ENCODE measurements at regions of chr5 and their contacts with region 1.

Region 1: GRCh38 chr5:178626484-178627258 is at the start of gene CLK4:
- DNase-seq: peak; percentile 97
- H3K4me3 Mint-ChIP-seq: peak within 1 kb of the TSS; percentile 88
- H3K27ac Mint-ChIP-seq: peak within 1 kb of the TSS; percentile 100
- H3K4me1 Mint-ChIP-seq: peaks cover 32% of the 10 kb centered on the region
- H3K27me3 Mint-ChIP-seq: no peaks in the 10 kb centered on the region
- CTCF ChIP-seq: no peak
- total RNA-seq, gene CLK4: 49.3 and 51.7 TPM in 2 replicates

Region 2: DNA sequence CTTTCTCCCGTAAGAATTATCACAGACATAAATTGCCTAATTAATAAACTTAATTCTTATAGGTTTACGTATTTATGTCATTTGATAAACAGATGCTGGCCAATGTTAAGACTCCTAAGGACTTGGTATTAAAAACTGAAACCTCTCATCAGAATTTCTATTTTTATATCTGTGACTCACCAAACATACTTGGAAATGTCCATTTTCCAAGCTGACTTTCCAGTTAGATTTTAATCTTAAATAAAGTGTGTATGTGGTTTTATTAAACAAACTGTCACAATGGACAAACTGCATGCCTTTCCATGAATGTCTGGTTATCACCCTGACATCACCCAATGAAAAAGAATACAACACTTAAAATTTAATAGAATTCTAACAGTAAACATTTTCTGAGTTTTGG is 23.9 kb before region 1 on chr5:
- CTCF ChIA-PET with region 1: interaction called, 5 read pairs
- POLR2A ChIA-PET with region 1: interaction called, 13 read pairs
- intact Hi-C with region 1: no loop called
- DNase-seq: no peak
- H3K4me3 Mint-ChIP-seq: no peak overlapping the region
- H3K27ac Mint-ChIP-seq: no peak overlapping the region
- H3K4me1 Mint-ChIP-seq: no peaks in the 10 kb centered on the region
- H3K27me3 Mint-ChIP-seq: no peaks in the 10 kb centered on the region
- CTCF ChIP-seq: no peak

Region 3: DNA sequence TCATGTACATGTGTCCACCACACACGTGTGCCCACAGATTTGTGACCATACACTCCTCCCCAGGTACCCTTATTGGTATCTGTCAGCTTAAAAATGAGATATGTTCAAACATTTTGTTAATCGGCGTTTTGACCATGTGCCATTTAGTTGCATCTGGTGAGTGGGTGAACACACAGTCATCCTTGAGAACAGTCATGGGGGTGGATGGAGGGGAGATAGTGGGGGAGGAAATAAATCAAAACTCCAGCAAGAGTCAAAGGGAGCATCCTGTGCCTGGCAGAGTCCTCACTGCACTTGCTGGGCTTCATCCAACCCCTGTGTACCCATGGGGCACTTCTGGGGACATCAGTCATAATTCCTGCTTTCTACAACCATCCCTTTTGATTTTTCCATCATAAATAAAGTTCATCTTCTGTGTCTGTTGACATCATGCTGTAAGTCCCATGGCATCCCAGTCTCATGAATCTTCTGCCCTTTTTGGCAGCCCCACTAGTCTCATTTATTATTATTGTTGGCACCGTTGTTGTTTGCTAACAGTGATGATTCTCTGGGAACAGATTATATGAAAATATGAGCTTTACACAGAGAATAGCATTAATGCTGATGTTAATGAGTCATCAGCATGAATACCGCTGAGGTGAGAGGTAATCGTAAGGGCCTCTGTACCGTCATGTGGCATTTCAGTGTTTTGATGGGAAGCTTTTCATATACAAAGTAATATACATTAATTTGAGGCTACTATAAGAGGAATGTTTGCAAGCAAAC is 24.6 kb after region 1 on chr5:
- CTCF ChIA-PET with region 1: no interaction called
- POLR2A ChIA-PET with region 1: interaction called, 79 read pairs
- intact Hi-C with region 1: loop called (anchors 2 kb)
- DNase-seq: peak; percentile 95
- H3K4me3 Mint-ChIP-seq: peak overlapping the region; percentile 5
- H3K27ac Mint-ChIP-seq: peak overlapping the region; percentile 17
- H3K4me1 Mint-ChIP-seq: peaks cover 23% of the 10 kb centered on the region
- H3K27me3 Mint-ChIP-seq: no peaks in the 10 kb centered on the region
- CTCF ChIP-seq: no peak

Region 4: GRCh38 chr5:178732281-178732680 is 105.6 kb after region 1 on chr5:
- CTCF ChIA-PET with region 1: interaction called, 8 read pairs
- POLR2A ChIA-PET with region 1: interaction called, 57 read pairs
- intact Hi-C with region 1: loop called (anchors 1 kb)
- DNase-seq: no peak
- H3K4me3 Mint-ChIP-seq: no peak overlapping the region
- H3K27ac Mint-ChIP-seq: no peak overlapping the region
- H3K4me1 Mint-ChIP-seq: peaks cover 8% of the 10 kb centered on the region
- H3K27me3 Mint-ChIP-seq: no peaks in the 10 kb centered on the region
- CTCF ChIP-seq: no peak

Region 5: GRCh38 chr5:178838695-178839685 is 212.3 kb after region 1 on chr5:
- CTCF ChIA-PET with region 1: no interaction called
- POLR2A ChIA-PET with region 1: interaction called, 4 read pairs
- intact Hi-C with region 1: loop called (anchors 5 kb)
- DNase-seq: peak; percentile 75
- H3K4me3 Mint-ChIP-seq: no peak overlapping the region
- H3K27ac Mint-ChIP-seq: no peak overlapping the region
- H3K4me1 Mint-ChIP-seq: peaks cover 5% of the 10 kb centered on the region
- H3K27me3 Mint-ChIP-seq: no peaks in the 10 kb centered on the region
- CTCF ChIP-seq: peak; percentile 93

Region 6: DNA sequence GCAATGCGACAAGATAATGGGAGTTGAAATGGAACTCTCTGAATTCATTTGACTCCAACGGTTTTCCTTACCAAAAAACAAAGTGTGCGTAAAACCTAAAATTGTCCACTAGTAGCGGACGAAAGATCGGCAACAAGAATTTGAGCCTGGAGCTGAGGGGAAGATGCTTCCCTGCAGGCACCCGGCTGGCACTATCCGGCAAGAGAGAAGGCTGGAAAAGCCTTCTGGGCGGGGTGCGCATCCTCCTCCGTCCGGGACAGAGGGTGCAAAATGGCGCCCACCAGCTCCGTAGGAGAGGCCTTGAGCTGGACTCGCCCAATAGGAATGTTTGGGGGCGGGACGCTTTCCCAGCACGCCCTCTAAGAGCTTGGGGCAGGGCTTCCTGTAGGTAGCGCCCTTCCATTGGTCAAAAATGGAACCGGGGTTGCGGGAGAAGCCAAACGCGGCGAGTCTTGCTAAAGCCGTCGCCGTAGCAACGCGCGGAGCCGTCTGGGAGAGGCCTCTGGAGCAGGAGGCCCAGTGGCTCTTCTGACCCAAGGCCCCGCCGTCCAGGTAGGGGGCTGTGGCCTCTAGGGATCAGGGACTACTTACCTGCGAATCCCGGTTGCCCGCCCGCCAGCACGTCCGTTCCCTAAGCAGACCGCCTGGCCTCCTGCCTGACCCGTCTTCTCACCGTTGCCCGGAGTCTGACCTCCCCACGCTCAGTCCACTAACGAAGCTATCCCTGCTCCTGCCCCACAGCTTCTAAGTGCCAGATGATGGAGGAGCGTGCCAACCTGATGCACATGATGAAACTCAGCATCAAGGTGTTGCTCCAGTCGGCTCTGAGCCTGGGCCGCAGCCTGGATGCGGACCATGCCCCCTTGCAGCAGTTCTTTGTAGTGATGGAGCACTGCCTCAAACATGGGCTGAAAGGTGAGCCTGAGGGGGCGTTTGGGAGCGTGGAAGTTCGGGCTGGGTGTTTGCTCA is 932.9 kb after region 1 on chr5:
- CTCF ChIA-PET with region 1: no interaction called
- POLR2A ChIA-PET with region 1: interaction called, 9 read pairs
- intact Hi-C with region 1: loop called (anchors 10 kb)
- DNase-seq: peak; percentile 100
- H3K4me3 Mint-ChIP-seq: peak overlapping the region; percentile 98
- H3K27ac Mint-ChIP-seq: peak overlapping the region; percentile 98
- H3K4me1 Mint-ChIP-seq: peaks cover 19% of the 10 kb centered on the region
- H3K27me3 Mint-ChIP-seq: no peaks in the 10 kb centered on the region
- CTCF ChIP-seq: no peak